ENCODE measurements at regions of chr17 and their contacts with region 1.

Region 1: GRCh38 chr17:78655251-78655940 is 78.2 kb upstream of the DNAH17 start:
- DNase-seq: no peak
- ATAC-seq: no peak
- H3K4me3 Mint-ChIP-seq: no peak overlapping the region
- H3K27ac Mint-ChIP-seq: no peak overlapping the region
- H3K4me1 Mint-ChIP-seq: no peaks in the 10 kb centered on the region
- H3K27me3 Mint-ChIP-seq: no peaks in the 10 kb centered on the region

Region 2: DNA sequence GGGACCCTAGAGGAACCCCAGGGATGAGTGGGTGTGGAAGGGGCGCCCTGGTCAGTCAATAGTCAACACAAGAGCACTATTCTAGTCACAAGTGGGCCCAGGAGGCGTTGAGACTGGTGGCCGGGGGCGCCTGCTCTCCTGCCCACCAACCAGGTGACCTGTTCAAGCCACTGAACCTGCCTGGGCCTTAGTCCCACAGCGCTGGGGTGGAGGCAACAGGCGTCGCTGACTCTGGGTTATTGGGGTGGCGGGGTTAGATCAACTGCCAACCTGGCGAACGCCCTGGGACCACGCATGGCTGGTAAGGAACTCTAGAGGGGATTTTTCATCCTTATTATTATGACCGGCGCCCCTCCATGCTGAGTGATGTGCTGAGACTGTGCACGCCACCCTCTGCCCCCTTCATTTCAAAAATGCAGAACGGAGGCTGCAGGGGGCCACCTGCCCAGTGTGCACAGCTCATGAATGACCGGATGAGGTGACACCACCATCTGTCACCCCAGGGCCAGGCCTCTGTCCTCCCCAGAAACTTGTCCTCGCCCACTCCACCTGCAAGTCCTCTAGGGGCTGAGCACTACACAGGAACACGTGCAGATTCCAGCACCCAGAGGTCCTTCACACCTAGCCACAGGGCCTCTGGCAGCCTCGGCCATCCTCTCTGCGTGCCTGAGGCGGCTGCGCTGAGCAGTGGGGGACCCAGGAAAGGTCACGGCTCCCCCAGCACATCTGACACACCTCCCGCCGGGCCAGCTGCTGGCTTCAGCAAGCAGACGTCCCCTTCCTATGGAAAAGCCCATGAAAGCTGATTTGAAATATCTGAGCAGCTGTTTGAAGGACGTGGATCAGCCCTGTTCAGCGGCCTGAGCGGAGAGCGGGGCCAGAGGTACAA is 26.6 kb before region 1 on chr17:
- POLR2A ChIA-PET with region 1: no interaction called
- DNase-seq: no peak
- ATAC-seq: no peak
- H3K4me3 Mint-ChIP-seq: no peak overlapping the region
- H3K27ac Mint-ChIP-seq: peak overlapping the region in 2 of 10 donors; percentile 48 to 70
- H3K4me1 Mint-ChIP-seq: peaks cover 3 to 20% (median 16%) of the 10 kb centered on the region in 4 donors
- H3K27me3 Mint-ChIP-seq: peaks cover 0 to 1% (median 0%) of the 10 kb centered on the region in 5 donors

Region 3: GRCh38 chr17:78665952-78666920 is 10.8 kb after region 1 on chr17:
- POLR2A ChIA-PET with region 1: interaction called, 11 read pairs
- DNase-seq: peak in 9 of 10 donors; percentile 21 to 75 (median 54)
- ATAC-seq: peak; percentile 65 to 90
- H3K4me3 Mint-ChIP-seq: peak overlapping the region; percentile 45 to 84 (median 73)
- H3K27ac Mint-ChIP-seq: peak overlapping the region; percentile 64 to 93 (median 87)
- H3K4me1 Mint-ChIP-seq: peaks cover 31 to 51% (median 37%) of the 10 kb centered on the region in 4 donors
- H3K27me3 Mint-ChIP-seq: no peaks in the 10 kb centered on the region

Region 4: DNA sequence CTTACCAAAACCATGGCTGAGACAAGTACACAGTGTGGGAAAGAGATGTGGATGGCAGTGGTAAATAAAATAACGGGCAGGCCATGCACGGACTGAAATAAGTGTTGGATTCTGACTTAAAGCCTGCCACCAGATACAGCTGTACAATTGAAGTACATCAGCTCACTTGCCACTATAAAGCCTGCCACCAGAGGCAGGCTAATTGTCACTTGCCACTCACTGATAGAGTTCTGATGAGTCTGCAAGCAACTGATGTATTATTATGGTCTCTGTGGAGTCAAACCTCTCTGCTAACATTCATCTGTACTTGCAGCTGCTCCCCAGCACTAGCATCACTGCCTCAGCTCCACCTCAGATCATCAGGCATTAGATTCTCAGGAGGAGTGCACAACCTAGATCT is 33.6 kb after region 1 on chr17:
- POLR2A ChIA-PET with region 1: no interaction called
- DNase-seq: no peak
- ATAC-seq: peak; percentile 55 to 60
- H3K4me3 Mint-ChIP-seq: no peak overlapping the region
- H3K27ac Mint-ChIP-seq: peak overlapping the region in 8 of 10 donors; percentile 19 to 89 (median 76)
- H3K4me1 Mint-ChIP-seq: peaks cover 3 to 24% (median 14%) of the 10 kb centered on the region in 4 donors
- H3K27me3 Mint-ChIP-seq: no peaks in the 10 kb centered on the region